ENCODE measurements at regions of chrX and their contacts with region 1.

Region 1: GRCh38 chrX:14528629-14529289 is 577 bp upstream of the GLRA2 start:
- DNase-seq: peak; percentile 4
- ATAC-seq: peak; percentile 91
- H3K4me3 ChIP-seq: no peak overlapping the region
- H3K27ac ChIP-seq: no peak overlapping the region
- H3K4me1 ChIP-seq: no peaks in the 10 kb centered on the region
- H3K27me3 ChIP-seq: no peaks in the 10 kb centered on the region
- CTCF ChIP-seq: peak; percentile 44 to 64 (median 63); a peak in 5 of 6 replicates
- EP300 ChIP-seq: no peak
- POLR2A ChIP-seq: no peak
- RAD21 ChIP-seq: peak; percentile 75

Region 2: GRCh38 chrX:14039344-14039743 is 489.4 kb before region 1 on chrX:
- CTCF ChIA-PET with region 1: interaction called, 3 read pairs
- POLR2A ChIA-PET with region 1: no interaction called
- RAD21 ChIA-PET with region 1: interaction called, 6 read pairs
- SMC1A ChIA-PET with region 1: interaction called, 7 read pairs
- in situ Hi-C with region 1: loop called (anchors 10 kb)
- intact Hi-C with region 1: loop called (anchors 1 kb)
- DNase-seq: no peak
- ATAC-seq: peak; percentile 95
- H3K4me3 ChIP-seq: no peak overlapping the region
- H3K27ac ChIP-seq: no peak overlapping the region
- H3K4me1 ChIP-seq: no peaks in the 10 kb centered on the region
- H3K27me3 ChIP-seq: peaks cover 0 to 2% of the 10 kb centered on the region in 2 experiments; a peak in 1 of 4 replicates
- CTCF ChIP-seq: peak; percentile 48 to 81 (median 61); a peak in 5 of 6 replicates
- EP300 ChIP-seq: peak in 1 of 2 experiments; percentile 99; a peak in 2 of 4 replicates
- POLR2A ChIP-seq: no peak
- RAD21 ChIP-seq: peak; percentile 88

Region 3: DNA sequence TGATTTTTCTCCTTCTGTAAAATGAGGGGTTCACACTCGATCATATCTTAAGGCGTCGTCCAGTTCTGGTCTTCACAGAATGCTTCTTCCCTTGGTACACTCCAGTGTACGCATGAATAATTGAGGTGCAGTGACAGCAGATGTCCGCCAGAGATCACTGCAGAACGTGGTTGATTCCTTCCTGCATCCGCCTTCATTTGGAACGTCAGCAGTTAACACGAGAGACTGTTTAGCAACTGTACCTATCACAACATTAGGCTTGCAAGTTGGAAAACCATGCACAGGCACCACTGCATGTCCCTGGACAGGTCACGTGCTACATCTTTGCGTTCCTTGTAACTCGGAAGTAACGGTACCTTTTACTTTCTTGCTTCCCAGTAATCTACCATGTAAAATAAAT is 433.1 kb before region 1 on chrX:
- CTCF ChIA-PET with region 1: interaction called, 6 read pairs
- POLR2A ChIA-PET with region 1: no interaction called
- RAD21 ChIA-PET with region 1: no interaction called
- SMC1A ChIA-PET with region 1: interaction called, 7 read pairs
- in situ Hi-C with region 1: loop called (anchors 10 kb)
- intact Hi-C with region 1: loop called (anchors 1 kb)
- DNase-seq: peak; percentile 4
- ATAC-seq: peak; percentile 97
- H3K4me3 ChIP-seq: no peak overlapping the region
- H3K27ac ChIP-seq: no peak overlapping the region
- H3K4me1 ChIP-seq: no peaks in the 10 kb centered on the region
- H3K27me3 ChIP-seq: no peaks in the 10 kb centered on the region; a peak in 1 of 4 replicates
- CTCF ChIP-seq: peak; percentile 72 to 80 (median 76)
- EP300 ChIP-seq: no peak
- POLR2A ChIP-seq: no peak
- RAD21 ChIP-seq: peak; percentile 77

Region 4: GRCh38 chrX:14497184-14497666 is 31.5 kb before region 1 on chrX:
- CTCF ChIA-PET with region 1: interaction called, 19 read pairs
- POLR2A ChIA-PET with region 1: no interaction called
- RAD21 ChIA-PET with region 1: interaction called, 6 read pairs
- SMC1A ChIA-PET with region 1: interaction called, 3 read pairs
- in situ Hi-C with region 1: no loop called
- intact Hi-C with region 1: no loop called
- DNase-seq: peak; percentile 12
- ATAC-seq: peak; percentile 90
- H3K4me3 ChIP-seq: peak overlapping the region; percentile 20; the same call in 1 of the 2 replicates
- H3K27ac ChIP-seq: peak overlapping the region; percentile 32
- H3K4me1 ChIP-seq: no peaks in the 10 kb centered on the region
- H3K27me3 ChIP-seq: no peaks in the 10 kb centered on the region
- CTCF ChIP-seq: no peak
- EP300 ChIP-seq: no peak
- POLR2A ChIP-seq: no peak
- RAD21 ChIP-seq: no peak

Region 5: GRCh38 chrX:14697451-14697850 is 168.7 kb after region 1 on chrX:
- CTCF ChIA-PET with region 1: interaction called, 4 read pairs
- POLR2A ChIA-PET with region 1: no interaction called
- RAD21 ChIA-PET with region 1: interaction called, 8 read pairs
- SMC1A ChIA-PET with region 1: no interaction called
- in situ Hi-C with region 1: no loop called
- intact Hi-C with region 1: loop called (anchors 2 kb)
- DNase-seq: no peak
- ATAC-seq: peak; percentile 96
- H3K4me3 ChIP-seq: no peak overlapping the region
- H3K27ac ChIP-seq: no peak overlapping the region
- H3K4me1 ChIP-seq: no peaks in the 10 kb centered on the region
- H3K27me3 ChIP-seq: no peaks in the 10 kb centered on the region
- CTCF ChIP-seq: peak; percentile 53 to 66 (median 64)
- EP300 ChIP-seq: no peak
- POLR2A ChIP-seq: no peak
- RAD21 ChIP-seq: peak; percentile 62